ENCODE measurements at regions of chr9 and their contacts with region 1.

Region 1: GRCh38 chr9:127214421-127215267 is 49.9 kb upstream of the GARNL3 start:
- DNase-seq: peak; percentile 76
- ATAC-seq: peak; percentile 75
- H3K4me3 Mint-ChIP-seq: no peak overlapping the region
- H3K27ac Mint-ChIP-seq: no peak overlapping the region
- H3K4me1 Mint-ChIP-seq: no peaks in the 10 kb centered on the region
- H3K27me3 Mint-ChIP-seq: peaks cover 4% of the 10 kb centered on the region

Region 2: GRCh38 chr9:126885131-126885641 is 329.5 kb before region 1 on chr9:
- CTCF ChIA-PET with region 1: no interaction called
- POLR2A ChIA-PET with region 1: no interaction called
- DNase-seq: no peak
- ATAC-seq: no peak
- H3K4me3 Mint-ChIP-seq: no peak overlapping the region
- H3K27ac Mint-ChIP-seq: no peak overlapping the region
- H3K4me1 Mint-ChIP-seq: no peaks in the 10 kb centered on the region
- H3K27me3 Mint-ChIP-seq: no peaks in the 10 kb centered on the region

Region 3: DNA sequence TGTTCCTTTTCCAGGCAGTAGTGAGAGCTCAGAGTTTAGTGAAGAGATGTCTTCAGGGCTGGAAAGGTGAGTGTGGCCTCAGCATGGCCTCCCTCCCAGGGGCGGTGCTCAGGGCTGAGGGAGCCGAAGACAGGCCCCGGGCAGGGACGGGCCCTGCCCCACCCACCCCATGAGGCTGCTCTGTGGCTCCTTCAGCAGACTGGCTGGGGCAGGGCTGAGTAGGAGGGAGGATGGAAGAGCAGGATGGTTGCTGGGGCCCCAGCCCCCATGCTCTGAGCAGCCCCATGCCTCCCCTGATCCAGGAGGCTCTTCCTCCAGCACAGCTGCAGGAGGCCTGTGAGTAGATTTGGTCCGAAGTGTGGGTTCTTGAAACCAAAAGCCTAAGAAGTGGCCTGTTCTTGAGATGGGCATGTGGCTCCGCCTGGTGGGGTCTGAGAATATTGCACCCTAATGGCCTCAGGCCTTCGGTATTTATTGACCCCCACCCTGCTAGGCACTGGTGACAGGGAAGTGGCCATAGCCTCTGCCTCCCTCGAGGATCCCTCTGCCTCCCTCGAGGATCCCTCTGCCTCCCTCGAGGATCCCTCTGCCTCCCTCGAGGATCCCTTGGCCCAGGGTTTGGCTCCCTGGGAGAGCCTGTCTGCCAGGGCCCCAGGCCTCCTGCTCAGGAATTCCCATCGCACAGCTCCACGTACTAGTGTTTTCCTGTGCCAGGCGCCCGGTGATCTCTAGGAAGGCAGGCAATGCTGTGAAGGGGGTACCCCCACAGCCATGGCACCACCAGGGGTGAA is 15.4 kb before region 1 on chr9:
- CTCF ChIA-PET with region 1: interaction called, 11 read pairs
- POLR2A ChIA-PET with region 1: no interaction called
- DNase-seq: peak; percentile 84
- ATAC-seq: peak; percentile 77
- H3K4me3 Mint-ChIP-seq: no peak overlapping the region
- H3K27ac Mint-ChIP-seq: no peak overlapping the region
- H3K4me1 Mint-ChIP-seq: peaks cover 7% of the 10 kb centered on the region
- H3K27me3 Mint-ChIP-seq: peaks cover 2% of the 10 kb centered on the region

Region 4: GRCh38 chr9:127244609-127245601 is 30.3 kb after region 1 on chr9:
- CTCF ChIA-PET with region 1: interaction called, 14 read pairs
- POLR2A ChIA-PET with region 1: no interaction called
- DNase-seq: peak; percentile 98
- ATAC-seq: peak; percentile 100
- H3K4me3 Mint-ChIP-seq: peak overlapping the region; percentile 79
- H3K27ac Mint-ChIP-seq: peak overlapping the region; percentile 66
- H3K4me1 Mint-ChIP-seq: peaks cover 12% of the 10 kb centered on the region
- H3K27me3 Mint-ChIP-seq: peaks cover 5% of the 10 kb centered on the region

Region 5: DNA sequence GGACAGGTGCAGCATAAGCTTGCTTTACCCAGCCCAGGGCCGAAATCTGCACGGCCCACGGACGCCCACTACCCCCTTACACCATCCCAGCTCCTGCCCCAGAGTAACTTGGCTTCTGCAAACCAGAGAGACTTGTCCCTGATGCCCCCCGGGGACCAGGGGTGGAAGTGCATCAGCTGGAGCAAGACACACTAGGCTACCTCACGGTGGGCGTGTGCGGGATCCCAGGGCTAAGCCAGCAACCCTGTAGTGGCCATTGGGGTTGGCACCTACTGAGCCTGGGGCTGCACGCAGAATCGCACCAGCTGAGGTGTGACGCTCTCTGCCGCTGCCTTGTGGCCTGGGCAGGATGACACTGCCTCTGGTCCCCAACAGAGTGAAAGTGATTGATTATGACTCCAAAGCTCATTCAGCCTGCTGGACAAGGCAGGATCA is 203.4 kb after region 1 on chr9:
- CTCF ChIA-PET with region 1: interaction called, 12 read pairs
- POLR2A ChIA-PET with region 1: no interaction called
- DNase-seq: peak; percentile 67
- ATAC-seq: peak; percentile 73
- H3K4me3 Mint-ChIP-seq: no peak overlapping the region
- H3K27ac Mint-ChIP-seq: no peak overlapping the region
- H3K4me1 Mint-ChIP-seq: peaks cover 11% of the 10 kb centered on the region
- H3K27me3 Mint-ChIP-seq: peaks cover 22% of the 10 kb centered on the region

Measured in activated CD8-positive, alpha-beta T cell treated with anti-CD3 and anti-CD28 coated beads, Interleukin-2, amount 10 ng/mL, durations not matched to agents 7 days and 5 days (primary cell).